GM12878 (cell line): ENCODE measurements at regions of chr11 and their contacts with region 1.

Region 1: GRCh38 chr11:29328961-29329441 is 687.8 kb downstream of the KCNA4 start:
- DNase-seq: no peak
- ATAC-seq: peak; percentile 76
- H3K4me3 ChIP-seq: no peak overlapping the region
- H3K27ac ChIP-seq: no peak overlapping the region
- H3K4me1 ChIP-seq: no peaks in the 10 kb centered on the region
- H3K27me3 ChIP-seq: no peaks in the 10 kb centered on the region
- CTCF ChIP-seq: peak; percentile 41 to 61 (median 59); a peak in 5 of 6 replicates
- EP300 ChIP-seq: no peak
- POLR2A ChIP-seq: no peak
- RAD21 ChIP-seq: peak; percentile 74

Region 2: GRCh38 chr11:27698872-27699474 is 1630.0 kb before region 1 on chr11:
- CTCF ChIA-PET with region 1: interaction called, 33 read pairs
- POLR2A ChIA-PET with region 1: no interaction called
- RAD21 ChIA-PET with region 1: interaction called, 43 read pairs
- SMC1A ChIA-PET with region 1: interaction called, 19 read pairs
- in situ Hi-C with region 1: loop called (anchors 5 kb)
- intact Hi-C with region 1: loop called (anchors 1 kb)
- DNase-seq: peak; percentile 23
- ATAC-seq: peak; percentile 88
- H3K4me3 ChIP-seq: no peak overlapping the region
- H3K27ac ChIP-seq: no peak overlapping the region
- H3K4me1 ChIP-seq: no peaks in the 10 kb centered on the region; the same call in 1 of the 2 replicates
- H3K27me3 ChIP-seq: peaks cover 6 to 22% of the 10 kb centered on the region in 2 experiments
- CTCF ChIP-seq: peak; percentile 55 to 96 (median 86)
- EP300 ChIP-seq: no peak
- POLR2A ChIP-seq: no peak
- RAD21 ChIP-seq: peak; percentile 89

Region 3: GRCh38 chr11:29184939-29185890 is 143.8 kb before region 1 on chr11:
- CTCF ChIA-PET with region 1: interaction called, 22 read pairs
- POLR2A ChIA-PET with region 1: no interaction called
- RAD21 ChIA-PET with region 1: interaction called, 15 read pairs
- SMC1A ChIA-PET with region 1: interaction called, 19 read pairs
- in situ Hi-C with region 1: no loop called
- intact Hi-C with region 1: no loop called
- DNase-seq: no peak
- ATAC-seq: no peak
- H3K4me3 ChIP-seq: no peak overlapping the region
- H3K27ac ChIP-seq: no peak overlapping the region
- H3K4me1 ChIP-seq: no peaks in the 10 kb centered on the region
- H3K27me3 ChIP-seq: no peaks in the 10 kb centered on the region
- CTCF ChIP-seq: no peak
- EP300 ChIP-seq: no peak
- POLR2A ChIP-seq: no peak
- RAD21 ChIP-seq: no peak

Region 4: DNA sequence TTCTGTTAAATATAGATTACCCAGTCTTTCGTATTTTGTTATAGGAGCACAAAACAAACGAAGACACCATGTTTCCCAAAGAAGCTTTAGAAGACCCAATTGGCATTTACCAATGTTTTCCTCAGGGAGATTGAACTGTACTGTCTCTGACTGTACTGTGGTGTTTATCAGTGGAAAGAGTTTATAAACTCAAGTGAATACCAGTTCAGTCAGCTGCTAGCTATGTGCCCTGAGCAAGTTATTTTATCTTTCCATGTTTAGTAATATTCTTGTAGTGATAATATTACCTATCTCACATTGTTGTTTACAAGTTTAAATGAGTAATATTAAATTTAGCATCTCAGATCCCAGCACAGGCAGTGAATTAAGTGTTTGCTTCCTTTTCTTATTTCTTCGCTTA is 85.4 kb before region 1 on chr11:
- CTCF ChIA-PET with region 1: interaction called, 11 read pairs
- POLR2A ChIA-PET with region 1: no interaction called
- RAD21 ChIA-PET with region 1: interaction called, 3 read pairs
- SMC1A ChIA-PET with region 1: interaction called, 3 read pairs
- in situ Hi-C with region 1: no loop called
- intact Hi-C with region 1: no loop called
- DNase-seq: no peak
- ATAC-seq: no peak
- H3K4me3 ChIP-seq: no peak overlapping the region
- H3K27ac ChIP-seq: no peak overlapping the region
- H3K4me1 ChIP-seq: no peaks in the 10 kb centered on the region
- H3K27me3 ChIP-seq: no peaks in the 10 kb centered on the region
- CTCF ChIP-seq: no peak
- EP300 ChIP-seq: no peak
- POLR2A ChIP-seq: no peak
- RAD21 ChIP-seq: no peak

Region 5: GRCh38 chr11:29282088-29282487 is 46.9 kb before region 1 on chr11:
- CTCF ChIA-PET with region 1: interaction called, 25 read pairs
- POLR2A ChIA-PET with region 1: no interaction called
- RAD21 ChIA-PET with region 1: interaction called, 14 read pairs
- SMC1A ChIA-PET with region 1: interaction called, 24 read pairs
- in situ Hi-C with region 1: no loop called
- intact Hi-C with region 1: no loop called
- DNase-seq: no peak
- ATAC-seq: peak; percentile 59
- H3K4me3 ChIP-seq: no peak overlapping the region
- H3K27ac ChIP-seq: no peak overlapping the region
- H3K4me1 ChIP-seq: no peaks in the 10 kb centered on the region
- H3K27me3 ChIP-seq: no peaks in the 10 kb centered on the region
- CTCF ChIP-seq: no peak
- EP300 ChIP-seq: no peak
- POLR2A ChIP-seq: no peak
- RAD21 ChIP-seq: no peak

Region 6: GRCh38 chr11:29343465-29344333 is 14.7 kb after region 1 on chr11:
- CTCF ChIA-PET with region 1: interaction called, 21 read pairs
- POLR2A ChIA-PET with region 1: no interaction called
- RAD21 ChIA-PET with region 1: no interaction called
- SMC1A ChIA-PET with region 1: interaction called, 7 read pairs
- in situ Hi-C with region 1: no loop called
- intact Hi-C with region 1: no loop called
- DNase-seq: no peak
- ATAC-seq: peak; percentile 98
- H3K4me3 ChIP-seq: no peak overlapping the region
- H3K27ac ChIP-seq: no peak overlapping the region
- H3K4me1 ChIP-seq: no peaks in the 10 kb centered on the region
- H3K27me3 ChIP-seq: no peaks in the 10 kb centered on the region
- CTCF ChIP-seq: peak; percentile 88 to 98 (median 97)
- EP300 ChIP-seq: no peak
- POLR2A ChIP-seq: no peak
- RAD21 ChIP-seq: peak; percentile 61

Region 7: GRCh38 chr11:29405305-29405704 is 76.3 kb after region 1 on chr11:
- CTCF ChIA-PET with region 1: no interaction called
- POLR2A ChIA-PET with region 1: no interaction called
- RAD21 ChIA-PET with region 1: no interaction called
- SMC1A ChIA-PET with region 1: no interaction called
- in situ Hi-C with region 1: no loop called
- intact Hi-C with region 1: no loop called
- DNase-seq: no peak
- ATAC-seq: no peak
- H3K4me3 ChIP-seq: no peak overlapping the region
- H3K27ac ChIP-seq: no peak overlapping the region
- H3K4me1 ChIP-seq: no peaks in the 10 kb centered on the region
- H3K27me3 ChIP-seq: no peaks in the 10 kb centered on the region
- CTCF ChIP-seq: no peak
- EP300 ChIP-seq: no peak
- POLR2A ChIP-seq: no peak
- RAD21 ChIP-seq: no peak